ENCODE measurements at regions of chr20 and their contacts with region 1.

Region 1: GRCh38 chr20:38751360-38751976 is 3.2 kb downstream of the ACTR5 start:
- DNase-seq: peak; percentile 68
- ATAC-seq: no peak
- H3K4me3 ChIP-seq: no peak overlapping the region
- H3K27ac ChIP-seq: no peak overlapping the region
- H3K4me1 ChIP-seq: peaks cover 17% of the 10 kb centered on the region; the same call in 1 of the 2 replicates
- H3K27me3 ChIP-seq: no peaks in the 10 kb centered on the region
- CTCF ChIP-seq: peak; percentile 84

Region 2: DNA sequence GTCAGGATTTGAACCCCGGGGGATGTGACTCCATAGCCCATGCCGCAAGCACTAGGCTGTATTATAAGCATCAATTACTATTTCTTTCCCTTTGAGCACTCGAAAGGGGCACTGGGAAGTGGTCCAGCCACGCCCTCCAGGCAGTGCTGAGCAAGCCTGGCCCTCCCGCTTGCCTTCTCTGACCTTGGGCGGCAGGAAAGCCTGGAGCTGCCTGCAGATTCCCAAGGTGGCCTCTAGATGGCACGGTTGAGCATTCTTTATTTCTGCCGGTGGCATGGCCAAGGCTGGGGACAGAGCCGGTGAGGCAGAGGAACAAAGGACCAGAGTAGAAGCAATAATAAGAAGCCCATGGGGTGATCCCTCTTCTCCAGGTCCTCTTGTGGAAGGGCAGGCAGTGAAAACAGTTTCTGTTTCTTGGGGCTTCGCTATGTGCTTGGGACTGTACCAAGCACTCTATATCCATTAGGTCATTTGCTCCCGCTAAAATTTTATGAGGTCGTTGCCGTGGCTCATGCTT is 117.8 kb before region 1 on chr20:
- CTCF ChIA-PET with region 1: no interaction called
- POLR2A ChIA-PET with region 1: no interaction called
- intact Hi-C with region 1: loop called (anchors 5 kb)
- DNase-seq: peak; percentile 76
- ATAC-seq: peak; percentile 84
- H3K4me3 ChIP-seq: no peak overlapping the region
- H3K27ac ChIP-seq: no peak overlapping the region
- H3K4me1 ChIP-seq: no peaks in the 10 kb centered on the region; the same call in 1 of the 2 replicates
- H3K27me3 ChIP-seq: no peaks in the 10 kb centered on the region
- CTCF ChIP-seq: peak; percentile 89

Region 3: GRCh38 chr20:38893565-38894090 is 142.2 kb after region 1 on chr20:
- CTCF ChIA-PET with region 1: no interaction called
- POLR2A ChIA-PET with region 1: no interaction called
- intact Hi-C with region 1: loop called (anchors 5 kb)
- DNase-seq: peak; percentile 75
- ATAC-seq: peak; percentile 95
- H3K4me3 ChIP-seq: peak overlapping the region; percentile 32; the same call in 1 of the 2 replicates
- H3K27ac ChIP-seq: no peak overlapping the region
- H3K4me1 ChIP-seq: peaks cover 4% of the 10 kb centered on the region; the same call in 1 of the 2 replicates
- H3K27me3 ChIP-seq: peaks cover 14% of the 10 kb centered on the region; the same call in 1 of the 2 replicates
- CTCF ChIP-seq: peak; percentile 83

Measured in PC-3 (cell line).